Activated naive CD4-positive, alpha-beta T cell treated with anti-CD3 and anti-CD28 coated beads for 36 hours (primary cell): ENCODE measurements at regions of chr5 and their contacts with region 1.

Region 1: GRCh38 chr5:148730943-148731861 is 76.9 kb upstream of the HTR4 start:
- DNase-seq: peak; percentile 87
- H3K4me3 Mint-ChIP-seq: no peak overlapping the region
- H3K27ac Mint-ChIP-seq: no peak overlapping the region
- H3K4me1 Mint-ChIP-seq: peaks cover 2% of the 10 kb centered on the region
- H3K27me3 Mint-ChIP-seq: peaks cover 3% of the 10 kb centered on the region

Region 2: DNA sequence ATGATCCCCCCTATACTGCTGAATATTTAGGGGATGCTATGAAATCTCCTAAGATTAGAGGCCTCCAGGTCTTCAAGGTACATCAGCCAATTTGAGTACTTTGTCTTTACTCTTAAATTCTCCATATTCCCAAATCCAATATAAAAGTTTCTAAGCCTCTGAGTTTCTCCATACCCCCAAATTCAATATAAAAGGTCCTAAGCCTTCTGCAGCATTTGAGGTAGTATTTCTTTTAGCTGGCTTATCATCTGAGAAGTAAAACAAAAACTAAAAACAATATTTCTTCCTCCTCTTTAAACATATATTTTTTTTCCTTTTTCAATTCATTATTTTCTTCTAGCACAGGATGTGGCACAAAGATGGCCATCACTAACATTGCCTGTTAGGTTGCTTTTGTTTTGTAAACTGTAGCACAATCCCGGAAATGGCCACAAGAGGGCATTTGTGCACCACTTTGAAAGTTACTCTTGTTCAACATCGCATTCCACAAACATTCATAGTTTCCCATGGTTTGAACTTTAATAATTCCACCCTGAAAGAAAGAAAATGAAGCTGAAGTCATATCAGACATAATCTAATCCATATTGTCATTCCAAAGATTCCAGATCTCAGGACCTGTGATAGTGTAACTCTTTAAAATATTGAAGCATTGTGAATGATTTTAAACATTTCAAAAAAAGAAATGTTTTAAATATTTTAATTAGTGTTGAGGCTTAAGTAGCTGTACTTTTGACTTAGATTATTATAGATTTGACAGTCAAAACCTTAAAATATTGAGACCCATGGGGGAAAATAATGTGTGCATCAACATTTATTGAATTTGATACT is 873.7 kb before region 1 on chr5:
- CTCF ChIA-PET with region 1: interaction called, 7 read pairs
- intact Hi-C with region 1: loop called (anchors 1 kb)
- DNase-seq: peak; percentile 69
- H3K4me3 Mint-ChIP-seq: no peak overlapping the region
- H3K27ac Mint-ChIP-seq: no peak overlapping the region
- H3K4me1 Mint-ChIP-seq: no peaks in the 10 kb centered on the region
- H3K27me3 Mint-ChIP-seq: peaks cover 3% of the 10 kb centered on the region

Region 3: GRCh38 chr5:147989977-147990376 is 741.2 kb before region 1 on chr5:
- CTCF ChIA-PET with region 1: no interaction called
- intact Hi-C with region 1: no loop called
- DNase-seq: no peak
- H3K4me3 Mint-ChIP-seq: no peak overlapping the region
- H3K27ac Mint-ChIP-seq: no peak overlapping the region
- H3K4me1 Mint-ChIP-seq: no peaks in the 10 kb centered on the region
- H3K27me3 Mint-ChIP-seq: no peaks in the 10 kb centered on the region

Region 4: DNA sequence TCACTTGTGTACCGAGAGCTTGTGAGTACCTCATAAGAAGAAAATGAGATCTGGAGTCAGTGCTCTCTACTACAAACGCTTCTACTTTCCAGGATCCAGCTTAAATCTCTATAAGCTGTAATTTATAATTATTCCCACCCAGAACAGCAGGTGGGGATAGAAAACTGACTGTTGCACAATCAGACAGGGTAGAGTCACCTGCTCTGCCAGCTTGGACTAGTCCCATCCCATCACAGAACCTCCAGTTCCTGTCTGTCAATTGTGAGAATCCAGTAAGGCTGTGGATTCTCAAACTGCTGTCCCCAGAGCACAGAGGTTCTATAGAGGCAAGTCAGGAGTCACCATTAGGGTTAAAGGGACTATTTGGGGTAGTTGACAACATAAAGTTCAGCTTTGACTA is 417.0 kb before region 1 on chr5:
- CTCF ChIA-PET with region 1: no interaction called
- intact Hi-C with region 1: loop called (anchors 2 kb)
- DNase-seq: no peak
- H3K4me3 Mint-ChIP-seq: no peak overlapping the region
- H3K27ac Mint-ChIP-seq: no peak overlapping the region
- H3K4me1 Mint-ChIP-seq: no peaks in the 10 kb centered on the region
- H3K27me3 Mint-ChIP-seq: no peaks in the 10 kb centered on the region

Region 5: DNA sequence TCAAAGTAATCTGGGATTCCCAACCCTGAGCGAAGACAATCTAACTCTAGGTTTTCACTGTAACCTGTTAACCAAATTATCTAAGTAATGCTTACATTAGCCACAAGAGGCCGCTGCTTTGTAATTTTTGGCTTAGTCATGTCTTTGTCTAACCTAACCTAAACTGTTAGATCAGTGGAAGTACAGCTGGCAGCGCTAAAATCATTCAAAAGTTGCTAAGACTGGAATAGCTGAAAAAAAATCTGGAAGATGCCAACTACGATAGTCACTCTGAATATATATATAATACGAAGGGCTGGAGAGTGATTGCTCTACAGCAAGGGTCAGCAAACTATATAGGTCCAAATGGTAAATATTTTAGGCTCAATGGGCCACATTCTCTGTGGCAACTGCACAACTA is 287.2 kb before region 1 on chr5:
- CTCF ChIA-PET with region 1: interaction called, 111 read pairs
- intact Hi-C with region 1: loop called (anchors 1 kb)
- DNase-seq: peak; percentile 67
- H3K4me3 Mint-ChIP-seq: no peak overlapping the region
- H3K27ac Mint-ChIP-seq: no peak overlapping the region
- H3K4me1 Mint-ChIP-seq: no peaks in the 10 kb centered on the region
- H3K27me3 Mint-ChIP-seq: no peaks in the 10 kb centered on the region

Region 6: GRCh38 chr5:148569948-148570347 is 161.3 kb before region 1 on chr5:
- CTCF ChIA-PET with region 1: no interaction called
- intact Hi-C with region 1: no loop called
- DNase-seq: no peak
- H3K4me3 Mint-ChIP-seq: no peak overlapping the region
- H3K27ac Mint-ChIP-seq: no peak overlapping the region
- H3K4me1 Mint-ChIP-seq: no peaks in the 10 kb centered on the region
- H3K27me3 Mint-ChIP-seq: peaks cover 26% of the 10 kb centered on the region

Region 7: DNA sequence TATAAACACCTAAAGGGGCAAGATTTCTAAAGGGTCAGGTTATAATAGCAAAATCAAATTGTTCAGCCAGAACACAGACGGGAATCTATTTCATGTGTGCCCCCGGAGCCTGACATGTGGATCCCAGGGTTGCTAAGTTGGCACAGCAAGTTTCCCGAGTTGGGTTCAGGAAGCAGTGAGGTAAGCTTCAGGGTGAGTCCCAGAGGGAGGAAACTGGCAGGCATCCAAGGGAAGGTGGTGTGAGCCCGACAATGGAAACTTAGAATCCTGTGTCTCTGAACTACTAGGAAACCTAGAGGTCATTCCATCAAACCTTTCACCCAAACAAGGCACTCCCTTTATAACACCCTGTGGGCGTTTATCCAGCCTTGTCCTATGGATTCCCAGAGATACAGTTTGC is 193.6 kb after region 1 on chr5:
- CTCF ChIA-PET with region 1: interaction called, 11 read pairs
- intact Hi-C with region 1: no loop called
- DNase-seq: no peak
- H3K4me3 Mint-ChIP-seq: no peak overlapping the region
- H3K27ac Mint-ChIP-seq: no peak overlapping the region
- H3K4me1 Mint-ChIP-seq: peaks cover 8% of the 10 kb centered on the region
- H3K27me3 Mint-ChIP-seq: peaks cover 16% of the 10 kb centered on the region

Region 8: DNA sequence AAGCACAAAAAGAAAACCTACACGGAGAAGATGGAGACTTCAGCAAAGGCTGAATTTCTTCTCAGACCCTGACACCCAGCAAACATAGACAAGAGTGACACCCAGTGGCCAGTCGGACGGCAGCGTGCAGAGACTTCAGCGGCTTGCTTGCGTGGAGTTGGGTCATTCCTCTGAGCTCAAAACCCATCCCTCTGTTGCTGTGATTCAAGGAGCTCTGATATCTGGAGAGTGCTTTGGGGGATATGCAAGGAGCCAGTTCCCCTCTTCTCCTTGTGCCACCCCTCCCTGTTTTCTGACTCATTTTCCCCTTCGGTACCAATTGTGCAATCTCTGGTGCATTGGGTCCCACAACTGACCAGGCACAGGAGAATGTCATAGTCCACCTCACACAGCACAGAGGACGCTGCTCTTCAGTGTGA is 304.2 kb after region 1 on chr5:
- CTCF ChIA-PET with region 1: interaction called, 105 read pairs
- intact Hi-C with region 1: loop called (anchors 1 kb)
- DNase-seq: peak; percentile 89
- H3K4me3 Mint-ChIP-seq: no peak overlapping the region
- H3K27ac Mint-ChIP-seq: no peak overlapping the region
- H3K4me1 Mint-ChIP-seq: peaks cover 24% of the 10 kb centered on the region
- H3K27me3 Mint-ChIP-seq: no peaks in the 10 kb centered on the region